Activated CD4-positive, alpha-beta T cell treated with anti-CD3 and anti-CD28 coated beads, Interleukin-2, amount 10 ng/mL, durations not matched to agents 24 days and 14 days (primary cell): ENCODE measurements at regions of chr11 and their contacts with region 1.

Region 1: DNA sequence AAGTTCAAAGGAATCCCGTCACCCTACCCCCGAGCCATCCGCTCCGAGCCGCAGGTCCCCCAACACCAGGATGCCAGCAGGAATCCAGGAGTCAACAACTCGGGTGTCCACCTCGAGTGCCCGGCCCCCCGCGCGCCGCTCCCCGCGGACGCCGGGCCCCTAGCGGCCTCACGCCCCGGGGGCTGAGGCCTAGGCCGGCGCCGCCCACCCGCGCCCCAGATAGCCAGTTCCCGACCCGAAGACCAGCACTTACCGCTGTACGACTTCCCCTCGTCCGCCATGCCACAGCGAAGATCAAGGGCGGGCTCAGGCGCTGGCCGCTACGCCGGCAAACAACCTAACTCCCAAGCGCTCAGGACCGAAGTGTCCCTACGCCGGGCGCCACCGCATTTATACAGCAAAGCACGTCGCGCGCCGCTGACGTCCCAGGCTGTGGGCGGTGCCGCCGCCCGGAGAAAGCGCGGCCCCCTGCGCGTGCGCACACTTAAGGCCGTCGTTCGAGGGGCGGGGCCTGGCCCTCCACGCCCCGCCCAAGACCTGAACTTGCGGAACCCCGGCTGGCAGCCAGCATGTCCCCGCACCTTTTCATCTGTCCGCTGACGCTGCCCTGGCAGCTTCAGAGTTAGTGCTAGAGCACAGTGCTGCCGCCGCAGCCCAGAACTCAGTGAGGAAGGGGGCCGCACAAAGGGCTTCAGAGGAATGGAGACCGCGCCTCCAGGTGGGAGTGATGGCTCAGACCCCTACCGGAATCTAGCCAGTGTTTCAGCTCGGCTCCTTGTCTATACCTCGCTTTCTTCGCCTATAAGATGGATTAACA is at the start of gene NXF1:
- DNase-seq: peak; percentile 99
- H3K4me3 Mint-ChIP-seq: peak within 1 kb of the TSS; percentile 100
- H3K27ac Mint-ChIP-seq: peak within 1 kb of the TSS; percentile 95
- H3K4me1 Mint-ChIP-seq: peaks cover 30% of the 10 kb centered on the region
- H3K27me3 Mint-ChIP-seq: no peaks in the 10 kb centered on the region
- total RNA-seq, gene NXF1: 133 and 147 TPM in 2 replicates

Region 2: DNA sequence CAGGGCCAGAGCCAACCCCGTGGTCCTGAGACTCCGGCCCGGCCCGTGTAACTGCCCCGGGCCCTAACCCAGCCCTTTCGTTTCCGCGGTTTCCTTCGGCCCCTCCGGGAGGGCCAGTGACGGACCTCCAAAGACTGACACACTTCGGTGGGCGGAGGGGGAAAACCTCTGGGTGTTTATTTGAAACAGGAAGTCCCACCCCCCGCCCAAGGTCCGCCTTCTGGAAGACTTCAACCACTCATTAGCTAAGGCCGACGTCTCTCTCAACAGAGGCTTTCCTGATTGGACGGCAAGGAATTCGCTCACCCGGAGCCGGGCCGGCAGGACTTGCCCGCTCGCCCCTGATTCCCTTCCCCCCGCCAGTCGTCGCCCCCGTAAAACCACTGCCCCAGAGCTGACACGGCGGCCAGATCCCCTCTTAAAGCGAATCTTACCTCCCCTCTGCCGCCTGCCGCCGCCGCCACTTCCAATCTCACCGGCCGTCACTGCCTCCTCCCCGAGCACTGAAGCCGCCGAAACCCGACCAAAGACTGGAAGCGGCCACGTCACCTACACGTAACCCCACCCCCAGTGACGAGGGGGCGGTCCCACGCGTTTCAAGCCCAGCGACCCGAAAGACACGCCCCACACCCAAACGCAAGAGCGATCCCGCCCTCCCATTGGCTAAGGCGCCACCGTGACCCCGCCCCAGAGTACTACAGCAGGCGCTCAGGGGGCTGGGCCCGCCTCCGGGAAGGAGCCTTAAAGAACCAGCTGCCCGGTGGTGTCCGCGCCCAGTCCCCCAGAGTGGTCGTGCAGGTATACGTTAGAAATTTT is 26.4 kb after region 1 on chr11 and contains the start of gene STX5:
- intact Hi-C with region 1: loop called (anchors 1 kb)
- DNase-seq: peak; percentile 100
- H3K4me3 Mint-ChIP-seq: peak within 1 kb of the TSS; percentile 89
- H3K27ac Mint-ChIP-seq: peak within 1 kb of the TSS; percentile 97
- H3K4me1 Mint-ChIP-seq: peaks cover 38% of the 10 kb centered on the region
- H3K27me3 Mint-ChIP-seq: no peaks in the 10 kb centered on the region
- total RNA-seq, gene STX5: 28.1 and 33.5 TPM in 2 replicates

Region 3: GRCh38 chr11:62841361-62842184 is 36.3 kb after region 1 on chr11:
- intact Hi-C with region 1: loop called (anchors 1 kb)
- DNase-seq: peak; percentile 95
- H3K4me3 Mint-ChIP-seq: no peak overlapping the region
- H3K27ac Mint-ChIP-seq: no peak overlapping the region
- H3K4me1 Mint-ChIP-seq: peaks cover 26% of the 10 kb centered on the region
- H3K27me3 Mint-ChIP-seq: no peaks in the 10 kb centered on the region

Region 4: DNA sequence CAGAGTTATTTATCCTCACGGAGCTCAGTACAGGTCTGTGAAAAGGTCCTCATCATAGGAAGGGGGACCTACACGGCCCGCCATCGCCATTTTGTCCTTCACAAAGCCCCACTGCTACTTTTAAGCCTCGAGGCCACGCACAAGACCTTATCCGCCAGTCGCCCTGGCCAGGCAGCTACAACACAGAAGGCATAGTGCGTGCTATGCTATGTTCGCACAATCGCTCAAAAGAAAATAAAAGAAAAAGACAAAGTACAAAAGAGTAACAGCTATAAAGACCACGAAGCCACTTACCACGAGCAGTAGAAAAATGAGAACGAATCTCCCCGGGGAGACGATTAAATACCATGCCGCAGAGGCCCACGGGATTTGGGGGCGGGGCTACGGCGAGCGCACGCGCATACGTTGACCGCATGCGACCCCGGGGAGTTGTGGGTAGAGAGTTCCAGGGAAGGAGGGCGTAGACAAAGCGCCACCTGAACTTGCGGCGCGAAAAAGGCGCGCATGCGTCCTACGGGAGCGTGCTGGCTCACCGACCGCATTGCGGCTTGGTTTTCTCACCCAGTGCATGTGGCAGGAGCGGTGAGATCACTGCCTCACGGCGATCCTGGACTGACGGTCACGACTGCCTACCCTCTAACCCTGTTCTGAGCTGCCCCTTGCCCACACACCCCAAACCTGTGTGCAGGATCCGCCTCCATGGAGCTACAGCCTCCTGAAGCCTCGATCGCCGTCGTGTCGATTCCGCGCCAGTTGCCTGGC is 50.5 kb after region 1 on chr11:
- intact Hi-C with region 1: loop called (anchors 1 kb)
- DNase-seq: peak; percentile 100
- H3K4me3 Mint-ChIP-seq: peak overlapping the region; percentile 97
- H3K27ac Mint-ChIP-seq: peak overlapping the region; percentile 98
- H3K4me1 Mint-ChIP-seq: peaks cover 55% of the 10 kb centered on the region
- H3K27me3 Mint-ChIP-seq: peaks cover 7% of the 10 kb centered on the region